PC-3 (cell line): ENCODE measurements at regions of chr2 and their contacts with region 1.

Region 1: DNA sequence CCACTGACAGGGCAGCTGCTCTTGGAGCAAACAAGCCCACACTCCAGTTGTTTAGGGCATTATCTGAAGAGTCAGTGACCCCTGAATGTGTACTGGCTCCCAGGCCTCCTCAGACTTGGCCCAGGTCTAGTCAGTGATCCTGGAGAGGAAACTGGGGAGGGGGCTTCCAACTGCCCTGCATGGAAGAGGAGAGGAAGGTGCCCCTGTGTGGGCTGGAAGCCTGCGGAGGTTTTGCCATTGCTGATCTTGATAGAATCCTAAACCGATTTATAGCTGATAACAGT is 197.4 kb downstream of the MGAT5 start:
- DNase-seq: no peak
- ATAC-seq: no peak
- H3K4me3 ChIP-seq: no peak overlapping the region
- H3K27ac ChIP-seq: no peak overlapping the region
- H3K4me1 ChIP-seq: peaks cover 7% of the 10 kb centered on the region
- H3K27me3 ChIP-seq: no peaks in the 10 kb centered on the region
- CTCF ChIP-seq: no peak

Region 2: GRCh38 chr2:134375935-134376334 is 75.4 kb before region 1 on chr2:
- CTCF ChIA-PET with region 1: interaction called, 12 read pairs
- POLR2A ChIA-PET with region 1: no interaction called
- intact Hi-C with region 1: loop called (anchors 1 kb)
- DNase-seq: peak; percentile 47
- ATAC-seq: peak; percentile 75
- H3K4me3 ChIP-seq: no peak overlapping the region
- H3K27ac ChIP-seq: no peak overlapping the region
- H3K4me1 ChIP-seq: peaks cover 13% of the 10 kb centered on the region
- H3K27me3 ChIP-seq: no peaks in the 10 kb centered on the region
- CTCF ChIP-seq: peak; percentile 54

Region 3: DNA sequence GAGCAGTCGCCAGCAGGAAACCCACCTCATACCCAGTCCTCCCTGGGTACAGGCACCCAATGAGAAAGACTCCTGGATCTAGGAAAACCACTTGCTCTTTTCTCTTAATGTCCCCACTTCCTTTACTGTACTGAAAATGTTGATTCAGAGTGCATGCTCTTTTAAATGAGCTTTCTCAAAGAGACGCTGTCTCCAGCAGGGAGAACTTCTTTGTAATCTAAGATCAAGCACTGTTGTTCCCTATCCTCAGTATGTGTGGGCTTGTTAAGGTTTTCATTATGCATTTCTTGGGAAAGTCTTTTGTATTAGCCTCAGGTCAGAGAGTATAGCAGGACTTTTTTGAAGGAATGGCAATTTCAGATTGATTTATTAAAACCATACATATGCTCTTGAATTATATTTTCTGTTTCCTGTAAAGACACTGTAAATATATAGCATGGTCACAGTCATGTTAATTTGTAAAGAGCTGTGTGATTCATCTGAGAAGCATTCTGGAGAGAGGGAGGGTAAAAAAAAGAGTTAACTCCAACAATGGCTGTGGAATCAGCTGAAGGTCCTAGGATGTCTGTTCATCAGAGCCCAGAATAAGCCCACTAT is 19.4 kb before region 1 on chr2:
- CTCF ChIA-PET with region 1: interaction called, 4 read pairs
- POLR2A ChIA-PET with region 1: no interaction called
- intact Hi-C with region 1: loop called (anchors 2 kb)
- DNase-seq: peak; percentile 71
- ATAC-seq: peak; percentile 85
- H3K4me3 ChIP-seq: no peak overlapping the region
- H3K27ac ChIP-seq: peak overlapping the region; percentile 73
- H3K4me1 ChIP-seq: peaks cover 20% of the 10 kb centered on the region
- H3K27me3 ChIP-seq: no peaks in the 10 kb centered on the region
- CTCF ChIP-seq: no peak